ENCODE measurements at regions of chr1 and their contacts with region 1.

Region 1: GRCh38 chr1:12549460-12550349 is 68.3 kb downstream of the DHRS3 start:
- DNase-seq: peak; percentile 73
- ATAC-seq: peak; percentile 29 to 57

Region 2: GRCh38 chr1:12407050-12407961 is 142.4 kb before region 1 on chr1:
- intact Hi-C with region 1: loop called in 1 of 2 experiments (anchors 10 kb)
- DNase-seq: no peak
- ATAC-seq: peak; percentile 38 to 80

Region 3: GRCh38 chr1:12454406-12455391 is 95.0 kb before region 1 on chr1:
- intact Hi-C with region 1: no loop called
- DNase-seq: no peak
- ATAC-seq: peak in 1 of 2 donors; percentile 43

Region 4: DNA sequence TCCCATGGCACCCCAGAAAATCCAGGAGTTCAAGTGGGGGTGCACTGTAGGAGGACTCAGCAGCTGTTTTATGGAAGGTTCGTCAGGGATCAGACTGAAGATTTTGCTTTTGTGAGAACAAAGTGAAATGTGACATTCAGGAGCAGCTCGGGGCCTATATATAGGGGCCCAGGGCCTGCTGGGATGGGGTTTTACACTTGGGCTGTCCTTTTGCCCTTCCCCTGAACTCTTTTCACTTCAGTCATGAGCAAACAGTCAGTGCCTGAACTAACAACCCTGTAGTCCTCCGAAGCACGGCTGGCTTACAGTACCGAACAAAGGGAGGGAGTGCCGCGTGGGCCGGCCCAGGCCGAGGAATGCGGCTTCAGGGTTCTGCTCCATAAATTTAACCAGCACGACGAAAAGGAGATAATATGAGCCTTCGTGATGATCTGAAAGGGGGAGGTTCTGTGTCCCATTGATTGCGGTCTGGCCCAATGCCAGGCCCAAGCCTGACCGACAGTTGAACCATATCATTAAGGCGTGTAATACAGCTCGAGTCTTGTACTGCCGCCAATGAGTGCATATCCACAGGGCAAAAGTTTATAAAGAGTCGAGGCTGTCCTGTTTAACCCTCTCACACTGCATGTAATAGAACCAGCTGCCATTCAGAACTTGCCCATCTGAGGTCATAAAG is 71.6 kb before region 1 on chr1:
- intact Hi-C with region 1: loop called in 1 of 2 experiments (anchors 10 kb)
- DNase-seq: peak; percentile 81
- ATAC-seq: peak; percentile 83 to 87

Region 5: GRCh38 chr1:12587981-12588640 is 38.4 kb after region 1 on chr1:
- intact Hi-C with region 1: no loop called
- DNase-seq: no peak
- ATAC-seq: no peak

Measured in left cardiac atrium (tissue), 4 donors.